Activated CD4-positive, alpha-beta memory T cell treated with anti-CD3 and anti-CD28 coated beads, Interleukin-2, amount 10 ng/mL, durations not matched to agents 7 days and 5 days (primary cell): ENCODE measurements at regions of chr20 and their contacts with region 1.

Region 1: DNA sequence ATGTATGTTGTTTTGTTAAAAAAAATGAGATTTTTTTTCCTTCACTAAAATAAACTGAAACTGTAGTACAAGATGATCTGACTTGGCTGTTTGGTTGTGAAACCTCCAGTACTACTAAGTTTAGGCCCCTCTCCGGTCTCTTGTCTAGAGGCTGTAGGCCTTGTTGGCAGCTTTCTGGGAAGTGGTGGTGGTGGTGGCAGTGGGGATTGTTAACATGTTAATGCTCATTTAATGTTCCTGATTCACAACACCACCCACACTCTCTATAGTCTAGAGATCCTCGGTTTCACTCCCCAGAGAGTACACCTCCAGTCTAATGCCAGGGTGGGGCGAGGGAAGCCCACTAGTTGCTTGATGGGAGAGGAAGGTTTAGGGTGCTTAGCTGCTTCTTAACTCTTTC is 24.1 kb downstream of the STK4 start:
- DNase-seq: peak; percentile 50
- H3K4me3 Mint-ChIP-seq: peak overlapping the region; percentile 72
- H3K27ac Mint-ChIP-seq: peak overlapping the region; percentile 88
- H3K4me1 Mint-ChIP-seq: peaks cover 73% of the 10 kb centered on the region
- H3K27me3 Mint-ChIP-seq: no peaks in the 10 kb centered on the region

Region 2: DNA sequence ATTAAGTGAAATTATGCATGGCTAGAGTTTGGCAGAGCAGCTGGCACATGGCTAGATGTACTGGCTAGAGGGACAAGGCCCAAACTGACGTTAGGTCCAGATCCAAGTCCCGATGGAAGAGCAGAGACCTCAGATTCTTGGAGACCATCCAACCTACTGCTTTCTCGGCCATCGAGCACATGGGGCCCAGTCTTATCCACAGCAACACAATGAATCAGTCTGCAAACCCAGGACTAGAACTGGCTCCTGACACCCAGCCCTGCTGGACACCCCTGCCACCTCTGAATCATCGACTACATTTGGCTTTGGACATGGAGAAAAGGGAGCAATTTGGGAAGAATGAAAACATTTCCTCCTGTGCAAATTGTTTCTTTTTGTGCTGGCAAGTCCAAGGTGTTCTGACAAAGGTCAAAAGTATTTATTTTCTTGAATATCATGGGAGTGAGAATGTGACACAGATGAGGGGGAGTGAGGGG is 128.9 kb before region 1 on chr20:
- CTCF ChIA-PET with region 1: no interaction called
- POLR2A ChIA-PET with region 1: no interaction called
- DNase-seq: no peak
- H3K4me3 Mint-ChIP-seq: no peak overlapping the region
- H3K27ac Mint-ChIP-seq: no peak overlapping the region
- H3K4me1 Mint-ChIP-seq: peaks cover 11% of the 10 kb centered on the region
- H3K27me3 Mint-ChIP-seq: no peaks in the 10 kb centered on the region

Region 3: GRCh38 chr20:44924570-44924969 is 65.9 kb before region 1 on chr20:
- CTCF ChIA-PET with region 1: no interaction called
- POLR2A ChIA-PET with region 1: no interaction called
- DNase-seq: no peak
- H3K4me3 Mint-ChIP-seq: no peak overlapping the region
- H3K27ac Mint-ChIP-seq: no peak overlapping the region
- H3K4me1 Mint-ChIP-seq: no peaks in the 10 kb centered on the region
- H3K27me3 Mint-ChIP-seq: no peaks in the 10 kb centered on the region

Region 4: DNA sequence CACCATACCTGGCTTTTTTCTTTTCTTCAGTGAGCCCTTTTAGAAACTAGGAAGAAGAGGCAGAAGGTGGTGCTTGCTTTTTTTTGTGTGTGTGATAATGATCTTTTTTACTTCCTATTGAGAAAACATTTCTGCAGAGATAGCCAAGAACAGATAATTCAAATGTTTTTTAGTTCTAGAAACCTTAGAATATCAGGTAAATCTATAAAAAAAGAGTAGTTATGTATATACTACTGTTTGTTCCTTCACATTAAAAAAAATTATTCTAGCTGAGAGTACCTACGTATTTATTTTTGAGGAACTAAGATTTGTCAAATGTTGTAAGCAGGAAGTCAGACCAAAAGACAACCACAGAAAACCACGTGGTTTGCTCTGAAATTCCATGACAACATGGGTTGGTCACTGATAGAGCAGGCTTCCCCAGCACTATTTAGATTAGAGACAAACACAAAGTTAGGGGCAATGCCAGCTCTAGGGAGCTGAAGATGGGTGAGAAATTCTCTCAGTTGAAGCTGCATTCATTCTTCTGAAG is 11.3 kb before region 1 on chr20:
- CTCF ChIA-PET with region 1: interaction called, 4 read pairs
- POLR2A ChIA-PET with region 1: interaction called, 22 read pairs
- DNase-seq: peak; percentile 79
- H3K4me3 Mint-ChIP-seq: peak overlapping the region; percentile 72
- H3K27ac Mint-ChIP-seq: peak overlapping the region; percentile 99
- H3K4me1 Mint-ChIP-seq: peaks cover 71% of the 10 kb centered on the region
- H3K27me3 Mint-ChIP-seq: no peaks in the 10 kb centered on the region